ENCODE measurements at regions of chr1 and their contacts with region 1.

Region 1: DNA sequence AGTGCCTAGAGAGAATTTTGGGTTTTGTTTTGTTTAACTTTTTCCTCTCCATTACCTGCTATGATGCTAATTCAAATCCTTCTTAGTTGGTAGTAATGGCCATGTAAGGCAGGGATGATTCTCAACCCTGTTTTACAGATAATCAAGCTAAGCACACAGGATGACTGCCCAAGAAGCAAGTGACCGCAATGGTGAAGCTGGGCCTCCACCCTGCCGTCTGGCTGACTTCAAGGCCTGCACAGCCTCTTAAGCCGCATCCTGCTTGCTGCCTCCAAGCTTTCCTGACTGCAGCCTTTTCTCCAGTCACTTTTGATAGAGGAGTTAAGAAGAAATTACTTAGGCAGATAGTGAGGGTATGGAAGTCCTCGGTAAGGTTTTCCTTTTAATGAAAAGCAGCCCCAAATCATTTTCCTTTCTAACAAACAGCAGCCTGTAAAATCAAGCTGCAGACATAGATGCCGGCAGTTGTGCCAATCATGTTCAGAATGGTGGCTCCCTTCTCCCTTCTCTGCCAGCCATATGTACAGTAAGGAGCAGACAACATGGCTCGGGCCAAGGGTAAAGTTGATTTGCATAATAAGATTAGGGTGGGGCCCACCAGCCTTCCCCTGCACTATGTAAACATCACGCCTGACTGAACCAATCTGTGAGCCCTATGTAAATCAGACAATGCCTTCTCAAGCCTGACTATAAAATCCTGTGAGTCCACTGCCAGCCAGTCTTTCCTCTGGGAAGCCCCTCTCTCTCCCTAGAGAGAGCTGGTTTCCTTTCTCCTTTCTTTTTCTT is 8.8 kb upstream of the CTBS start:
- DNase-seq: no peak
- ATAC-seq: peak in 2 of 4 donors; percentile 13 to 72
- H3K4me3 ChIP-seq: peak overlapping the region in 2 of 12 donors; percentile 16 to 28
- H3K27ac ChIP-seq: peak overlapping the region; percentile 7 to 73 (median 53)
- H3K4me1 ChIP-seq: peaks cover 0 to 18% (median 10%) of the 10 kb centered on the region in 12 donors
- H3K27me3 ChIP-seq: no peaks in the 10 kb centered on the region
- CTCF ChIP-seq: no peak
- POLR2A ChIP-seq: no peak

Region 2: DNA sequence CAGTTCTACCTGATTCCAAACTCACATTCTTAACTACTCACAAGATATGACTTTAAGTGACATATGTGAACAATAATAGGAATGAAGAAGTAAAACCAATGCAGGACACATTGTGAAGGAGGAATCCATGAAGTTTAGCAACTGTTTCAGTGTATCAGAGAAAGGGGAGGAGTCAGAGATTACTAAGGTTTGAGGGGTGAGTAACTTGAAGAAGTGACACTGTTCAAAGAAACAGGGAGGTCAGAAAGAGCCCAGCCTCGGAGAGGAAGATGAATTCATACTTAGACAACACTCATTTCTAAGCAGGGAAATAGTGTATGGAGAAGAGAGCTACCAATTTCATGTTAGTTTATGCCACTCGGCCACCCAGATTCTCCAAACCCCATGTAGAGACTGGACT is 132.1 kb before region 1 on chr1:
- intact Hi-C with region 1: loop called in 1 of 10 experiments (anchors 10 kb)
- DNase-seq: no peak
- ATAC-seq: no peak
- H3K4me3 ChIP-seq: no peak overlapping the region
- H3K27ac ChIP-seq: no peak overlapping the region
- H3K4me1 ChIP-seq: no peaks in the 10 kb centered on the region
- H3K27me3 ChIP-seq: peaks cover 0 to 15% (median 0%) of the 10 kb centered on the region in 9 donors
- CTCF ChIP-seq: no peak
- POLR2A ChIP-seq: no peak

Region 3: DNA sequence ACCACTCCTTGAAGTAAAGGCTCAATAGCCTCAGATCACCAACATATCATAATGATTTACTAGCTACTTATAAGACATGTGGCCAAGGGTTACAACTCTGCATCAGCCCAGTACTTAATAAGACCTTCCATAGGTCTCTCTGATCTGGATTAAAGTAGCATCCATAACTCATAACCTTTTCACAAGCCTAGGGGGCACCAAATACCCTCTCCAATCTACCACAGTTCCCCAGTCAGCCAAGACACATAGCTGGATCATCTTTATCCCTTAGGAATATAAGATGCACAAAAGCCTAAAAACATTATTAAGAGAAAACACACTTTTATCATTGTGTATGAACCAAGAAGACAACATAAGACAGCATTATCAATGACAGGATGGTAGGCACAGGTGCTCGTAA is 85.2 kb after region 1 on chr1:
- intact Hi-C with region 1: no loop called
- DNase-seq: no peak
- ATAC-seq: no peak
- H3K4me3 ChIP-seq: no peak overlapping the region
- H3K27ac ChIP-seq: no peak overlapping the region
- H3K4me1 ChIP-seq: no peaks in the 10 kb centered on the region
- H3K27me3 ChIP-seq: no peaks in the 10 kb centered on the region
- CTCF ChIP-seq: peak in 4 of 12 donors; percentile 13 to 32 (median 24)
- POLR2A ChIP-seq: no peak

Measured in heart left ventricle (tissue), 16 donors.